Endothelial cell of umbilical vein (primary cell): ENCODE measurements at regions of chr19 and their contacts with region 1.

Region 1: GRCh38 chr19:5790573-5791520 is at the start of gene DUS3L:
- DNase-seq: peak; percentile 99
- H3K4me3 ChIP-seq: peak within 1 kb of the TSS; percentile 17 to 75 (median 55)
- H3K27ac ChIP-seq: peak within 1 kb of the TSS; percentile 82
- H3K4me1 ChIP-seq: peaks cover 5% of the 10 kb centered on the region
- H3K27me3 ChIP-seq: no peaks in the 10 kb centered on the region
- CTCF ChIP-seq: no peak
- POLR2A ChIP-seq: peak; percentile 68
- total RNA-seq, gene DUS3L: 38.9 and 40.8 TPM in 2 replicates

Region 2: DNA sequence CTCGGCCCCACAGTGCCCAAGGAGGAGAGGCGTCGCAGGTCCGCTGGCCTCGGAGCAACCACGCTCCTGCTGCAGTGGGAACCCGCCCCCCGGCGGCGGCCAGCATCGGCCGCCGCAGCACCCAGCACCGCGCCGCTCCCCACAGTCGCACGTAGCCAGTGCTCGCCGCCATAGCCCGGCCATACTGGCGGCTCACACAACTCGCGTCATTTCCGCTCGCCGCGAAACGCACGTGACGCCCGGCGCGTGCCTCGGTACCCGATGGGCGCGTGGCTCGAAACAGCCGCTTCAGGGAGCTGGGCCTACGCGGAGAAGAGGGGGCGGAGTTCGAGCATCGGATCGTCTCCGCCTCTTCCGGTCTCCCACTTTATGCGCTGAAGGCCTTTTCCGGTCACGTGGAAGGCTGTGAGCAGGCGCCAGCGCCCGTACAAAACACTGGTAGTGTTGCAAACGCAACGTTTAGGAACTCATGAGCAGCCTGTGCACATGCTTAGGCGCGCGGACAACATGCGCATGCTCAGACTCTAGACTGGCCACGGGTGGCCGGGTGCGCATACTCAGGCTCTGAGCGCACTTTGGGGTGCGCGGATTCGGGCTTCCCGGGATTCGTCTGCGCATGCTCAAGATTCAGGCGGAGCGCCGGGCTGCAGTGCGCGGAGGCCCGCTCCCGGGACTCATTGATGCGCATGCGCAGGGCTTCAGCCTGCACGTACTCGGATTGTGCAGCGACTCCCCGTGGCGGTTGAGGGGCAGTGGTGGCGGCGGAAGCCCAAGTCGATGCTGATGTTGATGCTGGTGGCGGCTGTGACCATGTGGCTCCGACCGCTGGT is 70.7 kb before region 1 on chr19 and contains the starts of genes CATSPERD and LONP1:
- CTCF ChIA-PET with region 1: no interaction called
- POLR2A ChIA-PET with region 1: interaction called, 3 read pairs
- dilution Hi-C with region 1: no loop called
- intact Hi-C with region 1: loop called (anchors 1 kb)
- DNase-seq: peak; percentile 99
- H3K4me3 ChIP-seq: peak within 1 kb of the TSS; percentile 52 to 79 (median 75)
- H3K27ac ChIP-seq: peak within 1 kb of the TSS; percentile 85
- H3K4me1 ChIP-seq: peaks cover 15% of the 10 kb centered on the region
- H3K27me3 ChIP-seq: no peaks in the 10 kb centered on the region
- CTCF ChIP-seq: peak; percentile 92 to 98
- POLR2A ChIP-seq: peak; percentile 75
- total RNA-seq, gene CATSPERD: not detected in 2 replicates
- total RNA-seq, gene LONP1: 95.1 and 95.7 TPM in 2 replicates

Region 3: GRCh38 chr19:5753743-5754142 is 37.1 kb before region 1 on chr19:
- CTCF ChIA-PET with region 1: no interaction called
- POLR2A ChIA-PET with region 1: no interaction called
- dilution Hi-C with region 1: no loop called
- intact Hi-C with region 1: no loop called
- DNase-seq: no peak
- H3K4me3 ChIP-seq: no peak overlapping the region
- H3K27ac ChIP-seq: no peak overlapping the region
- H3K4me1 ChIP-seq: no peaks in the 10 kb centered on the region
- H3K27me3 ChIP-seq: no peaks in the 10 kb centered on the region
- CTCF ChIP-seq: no peak
- POLR2A ChIP-seq: no peak

Region 4: GRCh38 chr19:5773276-5773675 is 17.6 kb before region 1 on chr19:
- CTCF ChIA-PET with region 1: interaction called, 6 read pairs
- POLR2A ChIA-PET with region 1: no interaction called
- dilution Hi-C with region 1: no loop called
- intact Hi-C with region 1: loop called (anchors 1 kb)
- DNase-seq: no peak
- H3K4me3 ChIP-seq: no peak overlapping the region
- H3K27ac ChIP-seq: no peak overlapping the region
- H3K4me1 ChIP-seq: no peaks in the 10 kb centered on the region
- H3K27me3 ChIP-seq: no peaks in the 10 kb centered on the region
- CTCF ChIP-seq: no peak
- POLR2A ChIP-seq: no peak